OCI-LY7 (cell line): ENCODE measurements at regions of chr12 and their contacts with region 1.

Region 1: GRCh38 chr12:54359033-54359761 is 5.1 kb downstream of the GPR84 start:
- DNase-seq: peak; percentile 99
- H3K4me3 ChIP-seq: peak overlapping the region; percentile 74
- H3K27ac ChIP-seq: peak overlapping the region; percentile 68
- H3K4me1 ChIP-seq: peaks cover 46% of the 10 kb centered on the region
- CTCF ChIP-seq: no peak

Region 2: DNA sequence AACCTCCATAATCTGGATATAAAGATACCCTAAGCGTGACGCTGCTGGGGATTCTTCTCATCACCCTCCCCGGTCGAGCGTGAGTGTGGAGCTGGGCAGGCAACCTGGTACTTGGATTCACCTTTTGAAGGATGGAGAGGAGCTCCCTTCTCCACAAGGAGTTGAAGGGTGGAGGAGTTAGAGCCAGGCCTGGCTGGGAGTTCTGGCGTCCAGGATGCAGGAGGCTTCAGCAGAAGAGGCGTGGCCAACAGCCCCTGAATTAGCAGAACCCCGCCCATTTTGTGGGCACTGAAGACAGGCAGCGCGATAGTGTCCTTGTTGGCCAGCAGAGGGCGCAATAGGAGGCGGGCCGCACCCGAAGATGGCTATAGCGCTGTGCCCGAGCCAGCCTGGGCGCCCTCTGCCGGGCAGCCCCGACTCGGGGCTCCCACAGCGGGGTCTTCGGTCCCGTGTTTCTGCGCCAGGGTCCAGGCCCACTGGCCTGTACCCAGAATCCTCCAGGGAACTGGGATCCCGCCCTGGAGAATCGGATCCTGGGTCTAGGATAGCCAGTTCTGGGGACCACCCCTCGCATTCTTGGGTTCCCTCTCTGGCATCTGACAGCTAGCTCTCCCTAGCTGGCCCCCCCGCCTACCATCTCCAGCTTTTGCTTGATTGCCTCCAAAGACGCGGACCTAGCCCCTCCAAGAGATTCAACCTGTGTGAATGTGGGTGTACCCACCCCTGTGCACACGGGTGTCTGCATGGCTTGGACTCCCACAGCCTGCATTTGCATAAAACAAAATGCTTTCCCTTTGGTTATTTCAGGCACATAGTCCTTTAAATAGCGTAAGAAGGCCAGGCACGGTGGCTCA is 144.4 kb before region 1 on chr12:
- CTCF ChIA-PET with region 1: interaction called, 4 read pairs
- POLR2A ChIA-PET with region 1: interaction called, 6 read pairs
- intact Hi-C with region 1: loop called (anchors 1 kb)
- DNase-seq: peak; percentile 97
- H3K4me3 ChIP-seq: peak overlapping the region; percentile 55
- H3K27ac ChIP-seq: peak overlapping the region; percentile 89
- H3K4me1 ChIP-seq: peaks cover 63% of the 10 kb centered on the region
- CTCF ChIP-seq: peak; percentile 100

Region 3: GRCh38 chr12:54251667-54252284 is 107.4 kb before region 1 on chr12:
- CTCF ChIA-PET with region 1: no interaction called
- POLR2A ChIA-PET with region 1: interaction called, 3 read pairs
- intact Hi-C with region 1: loop called (anchors 1 kb)
- DNase-seq: peak; percentile 62
- H3K4me3 ChIP-seq: no peak overlapping the region
- H3K27ac ChIP-seq: no peak overlapping the region
- H3K4me1 ChIP-seq: no peaks in the 10 kb centered on the region
- CTCF ChIP-seq: peak; percentile 86

Region 4: DNA sequence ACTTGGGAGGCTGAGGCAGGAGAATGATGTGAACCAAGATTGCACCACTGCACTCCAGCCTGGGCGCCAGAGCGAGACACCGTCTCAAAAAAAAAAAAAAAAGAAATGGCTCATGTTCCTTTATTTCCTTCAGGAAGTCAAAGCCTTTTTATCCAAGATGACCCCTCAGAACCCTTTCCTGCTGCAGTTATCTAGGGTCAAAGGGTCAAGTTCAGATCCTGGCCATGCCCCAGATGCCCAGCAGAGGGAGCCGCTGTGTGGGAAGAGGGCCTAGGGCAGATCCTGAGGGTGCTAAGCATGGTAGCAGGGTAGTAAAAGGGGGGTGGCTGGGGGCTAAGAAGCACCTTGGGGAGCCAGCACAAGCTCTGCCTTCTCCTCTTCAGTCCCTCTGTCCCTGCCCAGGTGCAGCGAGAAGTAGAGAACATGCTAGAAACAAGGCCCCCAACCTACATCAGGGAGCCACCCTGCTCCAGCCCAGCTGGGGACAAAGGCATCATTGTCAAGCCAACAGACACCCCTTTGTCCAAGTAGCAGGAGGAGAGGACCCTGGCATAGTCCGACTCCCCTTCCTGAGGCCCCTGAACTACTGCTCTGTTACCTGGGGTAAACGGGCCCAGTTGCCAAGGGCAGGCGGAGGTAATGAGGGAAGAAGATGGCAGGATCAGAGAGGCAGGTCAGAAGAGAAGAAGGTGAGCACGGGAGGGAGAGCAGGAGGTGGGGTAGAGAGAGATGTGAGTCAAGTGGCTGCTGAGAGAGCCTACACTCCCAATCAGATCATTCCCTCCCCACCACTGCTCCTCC is 64.8 kb before region 1 on chr12:
- CTCF ChIA-PET with region 1: no interaction called
- POLR2A ChIA-PET with region 1: interaction called, 6 read pairs
- intact Hi-C with region 1: loop called (anchors 1 kb)
- DNase-seq: peak; percentile 58
- H3K4me3 ChIP-seq: no peak overlapping the region
- H3K27ac ChIP-seq: no peak overlapping the region
- H3K4me1 ChIP-seq: no peaks in the 10 kb centered on the region
- CTCF ChIP-seq: peak; percentile 85

Region 5: DNA sequence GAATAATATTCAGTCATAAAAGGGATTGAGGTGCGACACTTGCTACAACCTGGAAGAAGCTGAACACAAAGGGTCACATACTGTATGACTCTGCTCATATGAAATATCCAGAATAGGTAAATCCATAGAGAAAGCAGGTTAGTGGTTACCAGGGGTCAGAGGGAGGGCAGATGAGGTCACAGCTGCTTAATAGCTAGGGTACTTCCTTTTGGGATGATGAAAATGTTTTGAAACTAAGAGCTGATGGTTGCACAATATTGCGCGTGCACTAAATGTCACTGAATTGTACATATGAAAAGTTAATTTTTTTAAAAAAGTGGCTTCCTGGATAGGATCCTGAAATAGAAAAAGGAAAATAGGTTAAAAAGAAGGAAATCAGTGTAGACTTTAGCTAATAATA is 684.3 kb after region 1 on chr12:
- CTCF ChIA-PET with region 1: no interaction called
- POLR2A ChIA-PET with region 1: no interaction called
- intact Hi-C with region 1: no loop called
- DNase-seq: no peak
- H3K4me3 ChIP-seq: no peak overlapping the region
- H3K27ac ChIP-seq: no peak overlapping the region
- H3K4me1 ChIP-seq: no peaks in the 10 kb centered on the region
- CTCF ChIP-seq: no peak